ENCODE measurements at regions of chr2 and their contacts with region 1.

Region 1: GRCh38 chr2:202387608-202388342 is 11.6 kb downstream of the BMPR2 start:
- DNase-seq: no peak
- ATAC-seq: peak in 3 of 4 donors; percentile 34 to 76 (median 65)
- H3K4me3 ChIP-seq: no peak overlapping the region
- H3K27ac ChIP-seq: no peak overlapping the region
- H3K4me1 ChIP-seq: peaks cover 0 to 46% (median 29%) of the 10 kb centered on the region in 12 donors
- H3K27me3 ChIP-seq: no peaks in the 10 kb centered on the region
- CTCF ChIP-seq: no peak
- POLR2A ChIP-seq: no peak

Region 2: DNA sequence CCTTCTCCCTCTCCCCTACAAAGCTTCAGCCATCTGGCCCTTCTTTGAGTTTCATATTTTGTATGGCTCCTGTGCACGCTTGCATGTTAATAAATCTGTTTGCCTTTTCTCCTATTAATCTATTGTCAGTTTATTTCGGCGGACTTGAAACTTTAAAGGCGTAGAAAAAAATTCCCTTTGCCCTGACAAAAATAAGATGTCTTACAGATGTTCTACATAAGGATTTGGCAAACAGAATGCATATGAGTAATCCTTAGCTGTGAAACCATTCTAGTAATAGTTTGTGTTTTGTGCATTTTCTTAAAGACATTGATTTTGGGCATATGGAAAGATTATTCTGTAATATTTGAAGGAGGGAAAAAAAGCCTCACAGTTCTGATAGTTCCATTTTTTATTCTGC is 26.7 kb before region 1 on chr2:
- intact Hi-C with region 1: no loop called
- DNase-seq: no peak
- ATAC-seq: no peak
- H3K4me3 ChIP-seq: no peak overlapping the region
- H3K27ac ChIP-seq: no peak overlapping the region
- H3K4me1 ChIP-seq: no peaks in the 10 kb centered on the region
- H3K27me3 ChIP-seq: no peaks in the 10 kb centered on the region
- CTCF ChIP-seq: no peak
- POLR2A ChIP-seq: no peak

Region 3: GRCh38 chr2:202436626-202437025 is 48.9 kb after region 1 on chr2:
- intact Hi-C with region 1: loop called in 2 of 10 experiments (anchors 10 kb)
- DNase-seq: no peak
- ATAC-seq: no peak
- H3K4me3 ChIP-seq: no peak overlapping the region
- H3K27ac ChIP-seq: peak overlapping the region in 1 of 12 donors; percentile 10
- H3K4me1 ChIP-seq: peaks cover 0 to 50% (median 19%) of the 10 kb centered on the region in 12 donors
- H3K27me3 ChIP-seq: no peaks in the 10 kb centered on the region
- CTCF ChIP-seq: no peak
- POLR2A ChIP-seq: no peak

Region 4: GRCh38 chr2:202442882-202443281 is 55.1 kb after region 1 on chr2:
- intact Hi-C with region 1: loop called in 2 of 10 experiments (anchors 10 kb)
- DNase-seq: no peak
- ATAC-seq: no peak
- H3K4me3 ChIP-seq: no peak overlapping the region
- H3K27ac ChIP-seq: no peak overlapping the region
- H3K4me1 ChIP-seq: peaks cover 0 to 16% (median 8%) of the 10 kb centered on the region in 12 donors
- H3K27me3 ChIP-seq: no peaks in the 10 kb centered on the region
- CTCF ChIP-seq: no peak
- POLR2A ChIP-seq: no peak

Region 5: GRCh38 chr2:202479090-202479489 is 91.3 kb after region 1 on chr2:
- intact Hi-C with region 1: loop called in 1 of 10 experiments (anchors 10 kb)
- DNase-seq: no peak
- ATAC-seq: peak in 3 of 4 donors; percentile 36 to 82 (median 56)
- H3K4me3 ChIP-seq: no peak overlapping the region
- H3K27ac ChIP-seq: peak overlapping the region in 1 of 12 donors; percentile 13
- H3K4me1 ChIP-seq: peaks cover 0 to 14% (median 7%) of the 10 kb centered on the region in 12 donors
- H3K27me3 ChIP-seq: no peaks in the 10 kb centered on the region
- CTCF ChIP-seq: no peak
- POLR2A ChIP-seq: no peak

Measured in heart left ventricle (tissue), 16 donors.